ENCODE measurements at regions of chr1 and their contacts with region 1.

Region 1: GRCh38 chr1:172609528-172609927 is 49.4 kb upstream of the FASLG start:
- DNase-seq: no peak
- ATAC-seq: peak; percentile 83
- H3K4me3 Mint-ChIP-seq: no peak overlapping the region
- H3K27ac Mint-ChIP-seq: no peak overlapping the region
- H3K4me1 Mint-ChIP-seq: peaks cover 10% of the 10 kb centered on the region
- H3K27me3 Mint-ChIP-seq: no peaks in the 10 kb centered on the region

Region 2: DNA sequence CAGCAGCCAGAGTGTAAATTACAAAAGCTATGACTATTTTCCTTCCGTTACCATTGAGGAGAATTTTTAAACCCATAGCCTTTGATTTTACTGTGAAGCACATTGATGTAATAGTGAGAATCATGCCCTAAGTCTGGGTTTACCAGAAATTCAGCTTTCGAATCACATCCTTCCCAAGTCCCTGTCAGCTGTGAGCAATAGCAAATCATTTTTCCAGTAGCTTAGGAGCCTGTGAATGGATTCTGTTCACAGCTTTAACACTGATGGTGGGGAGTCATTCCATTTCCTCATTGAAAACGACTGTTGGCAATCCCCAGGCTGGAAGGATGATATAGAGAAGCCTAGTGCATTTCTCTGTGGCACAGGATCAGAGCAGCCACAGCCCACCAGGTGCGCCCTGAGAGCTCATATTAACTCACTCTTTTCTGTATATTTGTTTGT is 271.2 kb before region 1 on chr1:
- CTCF ChIA-PET with region 1: no interaction called
- DNase-seq: peak; percentile 51
- ATAC-seq: peak; percentile 78
- H3K4me3 Mint-ChIP-seq: no peak overlapping the region
- H3K27ac Mint-ChIP-seq: peak overlapping the region; percentile 65
- H3K4me1 Mint-ChIP-seq: peaks cover 44% of the 10 kb centered on the region
- H3K27me3 Mint-ChIP-seq: no peaks in the 10 kb centered on the region

Region 3: DNA sequence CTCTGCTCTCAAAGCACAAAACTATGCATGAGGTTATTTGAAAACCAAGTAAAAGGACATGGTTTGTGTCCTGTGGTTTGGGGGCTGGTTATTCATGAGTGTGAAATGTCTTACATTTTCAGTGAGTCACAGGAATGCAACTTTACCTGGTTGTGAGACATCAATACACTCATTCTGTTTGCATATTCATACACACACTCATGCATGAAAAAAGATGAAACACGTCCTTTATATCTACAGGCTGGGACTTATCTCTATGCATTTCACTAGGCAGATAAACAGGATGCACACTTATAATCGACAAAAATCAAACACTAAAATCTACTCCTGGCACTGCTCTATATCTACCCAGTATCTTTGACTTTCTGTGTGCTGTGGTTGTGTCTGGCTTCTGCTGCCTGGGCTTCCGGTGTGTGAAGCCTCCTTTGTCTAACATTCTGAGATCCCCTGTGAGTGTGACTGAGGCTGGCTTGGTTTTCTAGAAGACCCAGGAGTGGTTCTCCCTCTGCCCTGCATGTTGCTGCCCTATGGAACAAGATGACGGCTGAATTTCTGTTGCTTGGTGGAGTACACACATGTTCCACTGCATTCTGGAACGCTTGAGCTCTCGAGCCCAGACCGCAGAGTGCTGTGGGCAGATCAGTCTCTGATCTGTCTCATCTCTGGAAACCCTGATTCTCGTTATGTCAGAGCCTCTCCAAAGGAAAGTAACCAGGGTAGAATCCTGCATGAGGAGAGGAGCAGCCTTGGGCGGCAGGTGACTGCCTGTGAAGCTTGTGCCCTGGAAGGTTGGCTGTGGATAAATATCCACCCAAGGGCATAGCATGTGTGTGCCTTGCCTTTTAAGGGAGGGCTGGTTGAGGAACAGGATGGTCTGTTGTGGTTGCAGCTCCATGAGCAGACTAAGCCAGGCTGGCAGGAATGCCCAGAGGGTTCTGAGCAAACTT is 29.6 kb after region 1 on chr1:
- CTCF ChIA-PET with region 1: interaction called, 13 read pairs
- DNase-seq: peak; percentile 94
- ATAC-seq: peak; percentile 81
- H3K4me3 Mint-ChIP-seq: peak overlapping the region; percentile 52
- H3K27ac Mint-ChIP-seq: peak overlapping the region; percentile 91
- H3K4me1 Mint-ChIP-seq: peaks cover 71% of the 10 kb centered on the region
- H3K27me3 Mint-ChIP-seq: peaks cover 10% of the 10 kb centered on the region

Region 4: GRCh38 chr1:172662464-172663109 is 53.1 kb after region 1 on chr1:
- CTCF ChIA-PET with region 1: interaction called, 19 read pairs
- DNase-seq: peak; percentile 97
- ATAC-seq: peak; percentile 81
- H3K4me3 Mint-ChIP-seq: peak overlapping the region; percentile 94
- H3K27ac Mint-ChIP-seq: peak overlapping the region; percentile 96
- H3K4me1 Mint-ChIP-seq: peaks cover 78% of the 10 kb centered on the region
- H3K27me3 Mint-ChIP-seq: no peaks in the 10 kb centered on the region

Region 5: GRCh38 chr1:172713466-172713865 is 103.9 kb after region 1 on chr1:
- CTCF ChIA-PET with region 1: interaction called, 112 read pairs
- DNase-seq: no peak
- ATAC-seq: peak; percentile 28
- H3K4me3 Mint-ChIP-seq: no peak overlapping the region
- H3K27ac Mint-ChIP-seq: no peak overlapping the region
- H3K4me1 Mint-ChIP-seq: peaks cover 50% of the 10 kb centered on the region
- H3K27me3 Mint-ChIP-seq: no peaks in the 10 kb centered on the region

Region 6: GRCh38 chr1:172727956-172728603 is 118.6 kb after region 1 on chr1:
- CTCF ChIA-PET with region 1: interaction called, 71 read pairs
- DNase-seq: peak; percentile 72
- ATAC-seq: peak; percentile 80
- H3K4me3 Mint-ChIP-seq: no peak overlapping the region
- H3K27ac Mint-ChIP-seq: peak overlapping the region; percentile 12
- H3K4me1 Mint-ChIP-seq: peaks cover 35% of the 10 kb centered on the region
- H3K27me3 Mint-ChIP-seq: peaks cover 23% of the 10 kb centered on the region